HepG2 (cell line): ENCODE measurements at regions of chr3 and their contacts with region 1.

Region 1: DNA sequence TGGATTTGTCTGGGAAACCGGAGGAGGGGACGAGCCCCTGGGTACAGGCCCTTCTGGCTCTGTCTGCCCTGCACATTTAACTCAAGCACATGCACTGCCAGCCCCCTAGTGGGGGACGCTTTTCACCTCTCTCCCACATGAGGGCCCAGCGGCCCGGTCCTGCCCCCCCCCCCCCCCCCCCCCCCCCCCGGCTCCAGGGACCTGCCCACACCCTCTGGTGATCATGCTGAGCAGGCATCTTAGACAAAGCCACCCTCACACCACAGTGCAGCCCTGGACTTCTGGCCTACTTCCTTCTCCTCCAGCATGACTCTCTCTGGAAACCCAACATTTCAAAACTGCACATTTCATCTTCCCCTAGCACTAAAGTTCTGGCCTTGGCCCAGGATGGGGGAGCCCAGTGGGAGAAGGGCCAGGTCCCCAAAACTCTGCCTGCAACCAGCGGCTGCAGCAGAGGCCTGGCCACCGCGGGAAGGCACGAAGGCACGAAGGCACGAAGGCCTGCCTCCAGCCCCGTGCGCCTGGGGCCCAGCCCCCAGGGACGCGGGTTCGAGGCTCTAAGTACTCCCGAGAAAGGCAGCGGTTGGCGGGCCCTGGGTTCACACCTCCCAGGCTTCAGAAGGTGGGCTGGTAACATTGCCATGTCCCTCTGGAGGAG is 14.1 kb downstream of the KLF15 start:
- DNase-seq: peak; percentile 41
- ATAC-seq: peak; percentile 28
- H3K4me3 ChIP-seq: no peak overlapping the region
- H3K27ac ChIP-seq: no peak overlapping the region
- H3K4me1 ChIP-seq: peaks cover 38% of the 10 kb centered on the region
- H3K27me3 ChIP-seq: no peaks in the 10 kb centered on the region; a peak in 1 of 5 replicates
- CTCF ChIP-seq: peak; percentile 40
- EP300 ChIP-seq: no peak
- POLR2A ChIP-seq: no peak
- RAD21 ChIP-seq: no peak

Region 2: GRCh38 chr3:126267226-126267975 is 75.7 kb before region 1 on chr3:
- CTCF ChIA-PET with region 1: no interaction called
- POLR2A ChIA-PET with region 1: no interaction called
- in situ Hi-C with region 1: no loop called
- intact Hi-C with region 1: loop called (anchors 5 kb)
- DNase-seq: peak; percentile 88
- ATAC-seq: peak; percentile 90
- H3K4me3 ChIP-seq: peak overlapping the region; percentile 48 to 67 (median 57); a peak in 5 of 6 replicates
- H3K27ac ChIP-seq: peak overlapping the region; percentile 78
- H3K4me1 ChIP-seq: peaks cover 52% of the 10 kb centered on the region
- H3K27me3 ChIP-seq: peaks cover 0 to 2% of the 10 kb centered on the region in 2 experiments; a peak in 1 of 5 replicates
- CTCF ChIP-seq: peak; percentile 71
- EP300 ChIP-seq: no peak
- POLR2A ChIP-seq: peak in 1 of 2 experiments; percentile 52; a peak in 2 of 4 replicates
- RAD21 ChIP-seq: no peak; the same call in 1 of the 2 replicates